ENCODE measurements at regions of chr11 and their contacts with region 1.

Region 1: DNA sequence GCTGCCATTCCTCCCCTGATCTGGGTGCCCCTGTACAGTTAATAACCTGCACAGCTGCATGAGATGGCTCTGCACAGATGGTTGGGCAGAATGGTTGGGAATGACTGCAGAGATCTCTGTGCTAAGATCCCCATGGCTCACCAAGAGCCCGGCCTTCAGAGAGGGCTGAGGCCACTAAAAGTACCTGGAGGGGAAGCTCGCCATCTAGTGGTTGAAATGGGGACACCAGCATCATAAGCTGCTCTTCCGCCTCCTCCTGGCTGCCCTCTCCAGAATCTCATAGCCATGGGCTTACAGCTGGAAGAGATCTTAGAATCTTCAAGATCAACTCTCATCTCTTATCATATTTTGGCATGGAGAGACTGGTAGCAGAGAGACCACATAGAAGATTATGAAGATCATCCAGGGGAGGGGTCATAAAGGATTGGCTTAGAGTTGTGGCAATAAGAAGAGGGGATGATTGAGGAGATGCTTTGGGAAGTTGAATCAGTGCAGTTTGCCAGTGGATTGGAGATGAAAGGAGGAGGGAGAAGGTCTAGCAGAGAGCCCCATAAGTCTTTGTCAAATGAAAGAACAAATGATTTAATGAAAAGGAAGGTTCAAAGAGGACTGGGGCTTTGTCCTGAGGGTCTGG is 22.0 kb upstream of the TLCD5 start:
- DNase-seq: peak in 4 of 5 donors; percentile 32 to 44 (median 40)
- H3K4me3 ChIP-seq: no peak overlapping the region
- H3K4me3 Mint-ChIP-seq: no peak overlapping the region
- H3K27ac ChIP-seq: no peak overlapping the region
- H3K27ac Mint-ChIP-seq: no peak overlapping the region
- H3K4me1 ChIP-seq: no peaks in the 10 kb centered on the region
- H3K4me1 Mint-ChIP-seq: no peaks in the 10 kb centered on the region
- H3K27me3 ChIP-seq: no peaks in the 10 kb centered on the region
- H3K27me3 Mint-ChIP-seq: peaks cover 9 to 14% of the 10 kb centered on the region in 2 donors

Region 2: GRCh38 chr11:120235024-120235861 is 67.9 kb before region 1 on chr11:
- CTCF ChIA-PET with region 1: interaction called, 19 read pairs
- POLR2A ChIA-PET with region 1: no interaction called
- intact Hi-C with region 1: loop called (anchors 2 kb)
- DNase-seq: peak in 4 of 5 donors; percentile 26 to 32 (median 29)
- H3K4me3 ChIP-seq: no peak overlapping the region
- H3K4me3 Mint-ChIP-seq: no peak overlapping the region
- H3K27ac ChIP-seq: no peak overlapping the region
- H3K27ac Mint-ChIP-seq: no peak overlapping the region
- H3K4me1 ChIP-seq: no peaks in the 10 kb centered on the region
- H3K4me1 Mint-ChIP-seq: no peaks in the 10 kb centered on the region
- H3K27me3 ChIP-seq: no peaks in the 10 kb centered on the region
- H3K27me3 Mint-ChIP-seq: peaks cover 26 to 29% of the 10 kb centered on the region in 2 donors

Region 3: DNA sequence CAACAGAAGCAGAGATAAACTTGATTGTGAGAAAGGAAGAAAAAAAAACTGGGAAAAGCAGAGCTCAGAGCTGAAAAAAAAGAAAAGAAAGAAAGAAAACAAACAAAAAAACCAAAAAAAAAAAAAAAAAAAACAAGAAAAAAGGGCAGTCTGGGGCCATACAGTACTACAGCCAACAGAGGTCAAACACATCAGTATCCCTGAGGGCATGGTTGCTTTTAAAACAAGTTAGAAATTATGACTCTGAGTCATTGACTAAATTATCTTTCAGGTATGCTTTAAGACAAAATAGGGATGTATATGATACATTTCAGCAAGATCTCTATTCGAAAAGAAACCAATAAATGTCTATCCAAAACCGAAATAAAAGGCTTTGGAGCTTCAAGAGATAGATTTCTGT is 15.1 kb before region 1 on chr11:
- CTCF ChIA-PET with region 1: interaction called, 18 read pairs
- POLR2A ChIA-PET with region 1: no interaction called
- intact Hi-C with region 1: no loop called
- DNase-seq: no peak
- H3K4me3 ChIP-seq: no peak overlapping the region
- H3K4me3 Mint-ChIP-seq: no peak overlapping the region
- H3K27ac ChIP-seq: no peak overlapping the region
- H3K27ac Mint-ChIP-seq: no peak overlapping the region
- H3K4me1 ChIP-seq: no peaks in the 10 kb centered on the region
- H3K4me1 Mint-ChIP-seq: peaks cover 0 to 5% (median 0%) of the 10 kb centered on the region in 4 donors
- H3K27me3 ChIP-seq: peaks cover 5% of the 10 kb centered on the region
- H3K27me3 Mint-ChIP-seq: peaks cover 12 to 21% of the 10 kb centered on the region in 2 donors

Region 4: DNA sequence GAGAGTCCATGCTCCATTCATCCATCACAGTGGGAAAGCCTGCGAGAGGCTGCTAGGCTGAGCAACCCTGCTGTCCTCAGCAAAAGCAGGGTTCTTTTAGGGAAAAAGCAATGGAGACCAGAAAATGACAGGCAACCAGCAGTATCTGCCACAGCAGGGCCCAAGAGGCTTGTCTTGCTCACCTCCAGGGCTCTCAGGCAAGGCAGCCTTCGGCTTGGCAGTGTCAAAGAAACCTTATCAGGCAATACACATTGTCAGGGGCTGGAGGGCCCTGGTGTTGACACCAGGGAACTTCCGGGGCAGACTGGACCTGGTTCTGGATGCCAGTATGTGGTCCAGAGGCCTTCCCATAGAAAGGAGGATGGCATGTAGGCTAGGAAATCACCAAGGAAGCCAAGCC is 11.7 kb after region 1 on chr11:
- CTCF ChIA-PET with region 1: interaction called, 19 read pairs
- POLR2A ChIA-PET with region 1: no interaction called
- intact Hi-C with region 1: no loop called
- DNase-seq: no peak
- H3K4me3 ChIP-seq: no peak overlapping the region
- H3K4me3 Mint-ChIP-seq: no peak overlapping the region
- H3K27ac ChIP-seq: no peak overlapping the region
- H3K27ac Mint-ChIP-seq: no peak overlapping the region
- H3K4me1 ChIP-seq: no peaks in the 10 kb centered on the region
- H3K4me1 Mint-ChIP-seq: no peaks in the 10 kb centered on the region
- H3K27me3 ChIP-seq: no peaks in the 10 kb centered on the region
- H3K27me3 Mint-ChIP-seq: peaks cover 8 to 12% of the 10 kb centered on the region in 2 donors

Measured in CD4-positive, alpha-beta memory T cell (primary cell).